ENCODE measurements at regions of chr5 and their contacts with region 1.

Region 1: DNA sequence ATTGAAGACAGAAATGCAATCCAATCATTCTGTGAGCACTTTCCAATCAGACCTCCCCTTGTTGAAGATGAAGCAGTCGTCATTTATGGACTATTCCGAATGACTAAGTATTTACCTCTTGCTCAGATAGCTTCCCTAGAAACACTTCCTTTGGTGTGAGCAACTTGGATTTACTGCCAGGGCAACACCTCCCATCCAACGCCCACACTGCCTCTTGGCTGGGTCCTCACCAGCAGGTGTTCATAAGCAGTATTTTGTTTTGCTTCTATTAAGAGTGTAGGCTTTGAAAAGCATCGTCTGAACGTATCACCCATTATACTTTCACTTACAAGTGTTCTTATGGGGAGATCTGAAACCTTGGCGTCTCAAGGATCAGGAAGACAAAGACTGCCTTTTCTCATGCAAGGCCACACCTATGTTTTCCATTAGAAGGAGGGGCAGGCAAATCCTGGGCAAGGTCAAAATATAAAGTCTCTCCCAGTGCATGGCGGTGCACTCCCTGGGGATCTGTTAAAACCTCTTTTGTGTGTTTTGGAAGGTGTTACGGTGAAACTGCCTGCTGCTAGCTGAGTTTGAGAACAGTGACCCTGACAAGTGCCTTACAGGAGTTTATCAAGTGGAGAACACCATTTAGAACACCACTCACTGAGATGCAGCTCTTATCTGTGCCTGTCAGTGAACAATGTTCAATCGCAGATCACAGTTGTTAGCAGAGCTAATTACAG is 10.6 kb upstream of the MARCHF3 start:
- DNase-seq: no peak
- H3K4me3 ChIP-seq: no peak overlapping the region
- H3K27ac ChIP-seq: no peak overlapping the region
- H3K4me1 ChIP-seq: no peaks in the 10 kb centered on the region
- CTCF ChIP-seq: no peak

Region 2: GRCh38 chr5:126959188-126959587 is 81.8 kb before region 1 on chr5:
- CTCF ChIA-PET with region 1: no interaction called
- POLR2A ChIA-PET with region 1: interaction called, 10 read pairs
- intact Hi-C with region 1: no loop called
- DNase-seq: no peak
- H3K4me3 ChIP-seq: no peak overlapping the region
- H3K27ac ChIP-seq: no peak overlapping the region
- H3K4me1 ChIP-seq: peaks cover 11% of the 10 kb centered on the region
- CTCF ChIP-seq: no peak

Region 3: GRCh38 chr5:127011961-127012644 is 28.9 kb before region 1 on chr5:
- CTCF ChIA-PET with region 1: no interaction called
- POLR2A ChIA-PET with region 1: no interaction called
- intact Hi-C with region 1: no loop called
- DNase-seq: no peak
- H3K4me3 ChIP-seq: no peak overlapping the region
- H3K27ac ChIP-seq: no peak overlapping the region
- H3K4me1 ChIP-seq: no peaks in the 10 kb centered on the region
- CTCF ChIP-seq: no peak

Region 4: DNA sequence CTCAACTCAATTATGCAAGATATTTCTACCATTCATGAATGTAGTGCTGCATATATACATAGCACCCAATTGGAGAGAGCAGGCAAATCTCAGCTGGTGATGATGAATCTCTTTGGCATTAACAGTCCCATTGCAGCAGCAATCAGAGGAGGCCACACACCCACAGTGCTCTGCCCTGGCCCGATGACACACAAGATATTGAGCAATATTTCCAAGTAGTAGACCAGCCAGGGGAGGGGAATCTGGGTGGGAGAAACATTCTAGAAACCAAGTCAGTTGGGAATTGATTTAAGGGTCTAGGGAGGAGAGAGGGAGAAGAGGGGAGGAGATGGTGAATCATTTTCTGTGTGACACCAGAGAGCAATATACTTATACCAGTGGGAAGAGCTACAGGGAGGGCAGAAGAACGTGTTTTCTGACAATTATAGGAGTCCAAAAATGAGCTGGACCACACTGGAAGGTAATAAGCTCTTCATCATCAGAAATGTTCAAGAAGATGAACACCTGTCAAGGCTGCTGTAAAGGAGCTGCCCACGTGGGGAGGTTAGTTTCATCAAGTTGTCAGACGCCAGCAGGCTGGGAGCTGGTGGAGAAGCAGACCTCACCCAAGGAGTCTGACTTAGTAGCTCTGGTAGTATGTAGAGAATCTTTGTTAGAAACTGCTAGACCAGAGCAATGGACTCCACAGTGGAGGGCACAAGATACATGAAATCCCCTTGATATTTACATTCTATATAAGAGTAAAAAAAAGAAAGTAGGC is 47.5 kb after region 1 on chr5:
- CTCF ChIA-PET with region 1: no interaction called
- POLR2A ChIA-PET with region 1: no interaction called
- intact Hi-C with region 1: no loop called
- DNase-seq: no peak
- H3K4me3 ChIP-seq: no peak overlapping the region
- H3K27ac ChIP-seq: no peak overlapping the region
- H3K4me1 ChIP-seq: no peaks in the 10 kb centered on the region
- CTCF ChIP-seq: no peak